RWPE1 (cell line): ENCODE measurements at regions of chr17 and their contacts with region 1.

Region 1: DNA sequence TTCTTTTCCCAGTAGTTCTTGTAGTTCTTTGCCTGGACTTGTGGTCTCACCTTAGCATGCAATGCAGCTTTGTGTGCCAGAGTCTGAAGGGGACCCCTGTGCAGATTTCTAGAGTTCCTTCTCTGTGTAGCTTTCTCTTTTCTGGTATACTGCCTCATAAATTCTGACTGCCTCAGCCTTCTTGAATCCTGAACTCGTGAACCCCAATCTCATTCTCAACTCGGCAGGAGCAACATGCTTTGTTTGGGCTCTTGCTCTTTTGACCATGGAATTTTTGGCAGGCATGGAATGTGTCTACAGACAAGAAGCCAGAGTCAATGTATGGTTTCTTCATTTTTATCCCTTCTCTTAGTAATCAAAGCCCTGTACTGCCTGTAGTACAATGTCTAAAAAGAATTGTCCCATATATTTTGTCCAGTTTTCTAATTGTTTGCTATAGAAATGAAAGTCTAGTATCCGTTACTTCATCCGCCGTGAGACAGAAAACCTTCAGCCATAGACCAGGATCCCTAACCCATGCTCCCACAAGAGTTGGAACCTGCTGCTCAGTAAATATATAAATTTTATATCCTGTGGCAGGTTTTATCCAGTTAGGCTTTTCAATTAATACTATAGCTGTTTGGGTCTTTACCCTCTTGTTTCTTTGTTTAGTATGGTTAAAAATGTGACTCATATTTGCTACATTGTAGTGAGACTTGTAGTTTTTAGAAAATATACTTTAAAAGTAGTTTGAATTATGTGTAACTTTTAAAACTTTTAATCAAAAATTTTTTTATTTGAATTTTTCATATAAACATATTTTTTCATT is 54.5 kb downstream of the VMP1 start:
- DNase-seq: no peak
- H3K27ac ChIP-seq: no peak overlapping the region
- CTCF ChIP-seq: no peak

Region 2: DNA sequence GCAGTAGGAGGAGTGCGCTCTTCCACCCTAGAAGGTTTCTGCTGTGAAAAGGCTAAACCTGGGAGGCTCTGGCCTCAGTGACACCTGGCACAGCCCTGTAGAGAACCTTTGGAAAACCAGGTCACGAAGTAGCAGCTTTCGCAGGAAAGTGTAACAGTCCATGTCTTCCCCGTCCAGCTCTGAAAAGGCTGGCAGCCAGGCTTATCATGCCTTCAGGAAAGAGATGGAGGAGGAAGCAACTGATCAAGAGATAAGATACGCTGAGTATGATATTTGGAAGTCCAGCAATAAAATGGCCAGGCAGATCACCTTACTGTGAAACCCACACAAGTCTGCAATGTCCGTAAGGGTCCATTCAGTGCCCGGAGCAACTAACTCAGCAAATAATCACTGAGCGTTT is 108.6 kb after region 1 on chr17:
- CTCF ChIA-PET with region 1: no interaction called
- POLR2A ChIA-PET with region 1: interaction called, 10 read pairs
- DNase-seq: no peak
- H3K27ac ChIP-seq: no peak overlapping the region
- CTCF ChIP-seq: no peak